Caco-2 (cell line): ENCODE measurements at regions of chr1 and their contacts with region 1.

Region 1: DNA sequence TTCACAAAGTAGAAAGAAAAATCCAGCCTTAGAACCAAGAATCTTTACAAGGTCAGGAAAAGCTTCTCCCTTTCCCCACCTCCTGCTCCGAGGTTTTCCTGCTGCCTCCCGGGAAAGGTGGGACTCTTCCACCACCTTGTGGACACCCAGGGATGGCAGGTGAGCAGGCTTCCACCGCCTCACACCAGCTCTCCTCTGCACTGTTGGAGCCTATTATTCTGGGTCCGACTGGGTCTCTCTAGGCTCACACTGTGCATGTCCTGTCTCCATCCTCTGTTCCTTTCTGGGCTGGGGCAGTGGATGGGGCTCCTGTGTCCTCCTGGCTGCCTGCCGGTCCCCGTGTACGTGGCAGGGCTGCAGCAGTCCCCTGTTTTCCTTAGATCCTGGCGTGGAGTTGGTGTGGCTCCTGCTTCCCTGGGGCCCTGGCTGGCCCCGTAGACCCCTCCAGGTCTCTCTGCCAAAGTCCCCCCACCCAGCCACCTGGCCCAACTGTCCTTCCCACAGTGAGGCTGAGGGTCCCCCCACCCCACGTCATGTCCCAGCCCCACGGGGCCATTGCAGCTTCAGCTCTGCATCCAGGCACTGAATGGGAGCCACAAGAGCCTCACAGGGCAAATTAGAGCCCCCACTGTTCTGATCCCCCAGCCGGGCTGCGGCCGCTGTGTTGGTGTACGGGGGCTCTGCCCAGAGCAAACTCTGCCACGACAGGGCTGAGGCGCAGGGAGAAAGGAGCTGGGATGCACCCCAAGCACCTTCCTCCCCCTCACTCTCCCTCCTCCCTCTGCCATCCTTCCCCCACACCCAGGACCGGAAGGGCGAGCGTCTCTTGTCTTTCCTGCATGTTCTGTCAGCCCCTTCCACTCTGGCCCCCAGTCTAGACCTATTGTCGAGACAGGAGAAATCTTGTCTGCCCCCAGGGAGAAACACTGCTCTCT is 3.3 kb upstream of the SLC45A1 start:
- DNase-seq: peak; percentile 79 to 88
- H3K4me3 ChIP-seq: no peak overlapping the region
- H3K4me3 Mint-ChIP-seq: no peak overlapping the region
- H3K27ac Mint-ChIP-seq: peak overlapping the region; percentile 39
- H3K4me1 ChIP-seq: peaks cover 13% of the 10 kb centered on the region; the same call in 1 of the 2 replicates
- H3K4me1 Mint-ChIP-seq: peaks cover 21% of the 10 kb centered on the region
- H3K27me3 ChIP-seq: no peaks in the 10 kb centered on the region
- H3K27me3 Mint-ChIP-seq: no peaks in the 10 kb centered on the region
- CTCF ChIP-seq: peak; percentile 86 to 88

Region 2: GRCh38 chr1:7983086-7983778 is 331.4 kb before region 1 on chr1:
- CTCF ChIA-PET with region 1: interaction called, 6 read pairs
- POLR2A ChIA-PET with region 1: no interaction called
- intact Hi-C with region 1: loop called (anchors 1 kb)
- DNase-seq: no peak
- H3K4me3 ChIP-seq: no peak overlapping the region
- H3K4me3 Mint-ChIP-seq: no peak overlapping the region
- H3K27ac Mint-ChIP-seq: no peak overlapping the region
- H3K4me1 ChIP-seq: peaks cover 11% of the 10 kb centered on the region; the same call in 1 of the 2 replicates
- H3K4me1 Mint-ChIP-seq: peaks cover 7% of the 10 kb centered on the region
- H3K27me3 ChIP-seq: no peaks in the 10 kb centered on the region
- H3K27me3 Mint-ChIP-seq: no peaks in the 10 kb centered on the region
- CTCF ChIP-seq: no peak

Region 3: GRCh38 chr1:8026153-8026975 is 288.2 kb before region 1 on chr1 and contains the start of gene ERRFI1:
- CTCF ChIA-PET with region 1: interaction called, 17 read pairs
- POLR2A ChIA-PET with region 1: interaction called, 5 read pairs
- intact Hi-C with region 1: no loop called
- DNase-seq: peak; percentile 91 to 97
- H3K4me3 ChIP-seq: peak within 1 kb of the TSS; percentile 50
- H3K4me3 Mint-ChIP-seq: peak within 1 kb of the TSS; percentile 89
- H3K27ac Mint-ChIP-seq: peak within 1 kb of the TSS; percentile 88
- H3K4me1 ChIP-seq: peaks cover 43% of the 10 kb centered on the region
- H3K4me1 Mint-ChIP-seq: peaks cover 38% of the 10 kb centered on the region
- H3K27me3 ChIP-seq: no peaks in the 10 kb centered on the region
- H3K27me3 Mint-ChIP-seq: no peaks in the 10 kb centered on the region
- CTCF ChIP-seq: no peak
- total RNA-seq, gene ERRFI1: 37.2 and 40.9 TPM in 2 replicates

Region 4: GRCh38 chr1:8259498-8260290 is 54.9 kb before region 1 on chr1:
- CTCF ChIA-PET with region 1: interaction called, 4 read pairs
- POLR2A ChIA-PET with region 1: no interaction called
- intact Hi-C with region 1: loop called (anchors 1 kb)
- DNase-seq: peak in 1 of 2 experiments; percentile 25
- H3K4me3 ChIP-seq: peak overlapping the region; percentile 11; the same call in 1 of the 2 replicates
- H3K4me3 Mint-ChIP-seq: peak overlapping the region; percentile 53
- H3K27ac Mint-ChIP-seq: peak overlapping the region; percentile 87
- H3K4me1 ChIP-seq: peaks cover 16% of the 10 kb centered on the region
- H3K4me1 Mint-ChIP-seq: peaks cover 26% of the 10 kb centered on the region
- H3K27me3 ChIP-seq: no peaks in the 10 kb centered on the region
- H3K27me3 Mint-ChIP-seq: no peaks in the 10 kb centered on the region
- CTCF ChIP-seq: no peak